A673 (cell line): ENCODE measurements at regions of chr2 and their contacts with region 1.

Region 1: DNA sequence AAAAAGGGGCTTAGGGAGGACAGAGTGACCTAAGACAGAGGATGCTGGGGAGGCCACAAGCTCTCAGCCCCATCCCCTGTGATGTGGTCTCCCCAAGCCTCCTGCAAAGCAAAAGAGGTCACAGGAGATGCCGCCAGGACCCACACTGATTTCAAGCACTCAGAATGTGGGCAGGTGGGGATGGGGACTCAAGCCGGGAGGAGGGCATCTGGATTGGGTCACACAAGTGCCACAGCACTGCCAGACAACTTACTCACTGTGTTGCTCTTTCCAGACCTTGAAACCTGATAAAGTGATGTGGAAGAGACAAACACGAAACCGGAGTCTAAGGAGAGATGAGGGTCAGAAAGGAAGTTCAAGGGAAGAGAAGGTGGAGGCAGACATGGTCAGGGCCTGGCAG is 95.7 kb downstream of the TTC32 start:
- DNase-seq: no peak
- H3K4me3 ChIP-seq: no peak overlapping the region
- H3K27ac ChIP-seq: no peak overlapping the region
- H3K4me1 ChIP-seq: no peaks in the 10 kb centered on the region
- H3K27me3 ChIP-seq: peaks cover 3% of the 10 kb centered on the region
- CTCF ChIP-seq: no peak

Region 2: DNA sequence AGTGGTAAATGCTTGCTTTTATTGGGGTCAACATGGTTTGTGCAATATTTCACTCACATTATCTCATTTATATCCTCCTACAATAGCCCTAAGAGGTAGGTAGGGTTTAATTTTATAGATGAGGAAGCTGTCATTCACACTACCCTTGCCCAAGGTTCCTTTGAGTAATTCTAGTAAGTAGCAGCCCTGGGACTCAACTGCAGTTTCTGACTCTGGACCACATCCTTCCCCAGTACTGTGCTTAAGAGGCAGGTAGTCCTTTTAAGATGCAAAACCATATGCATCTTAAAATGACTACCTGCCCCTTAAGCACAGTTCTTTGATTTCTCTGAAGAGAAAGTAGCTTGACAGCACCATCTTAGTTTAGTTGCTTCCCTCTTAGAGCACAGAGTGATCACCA is 1201.0 kb before region 1 on chr2:
- CTCF ChIA-PET with region 1: no interaction called
- POLR2A ChIA-PET with region 1: no interaction called
- intact Hi-C with region 1: no loop called
- DNase-seq: no peak
- H3K4me3 ChIP-seq: no peak overlapping the region
- H3K27ac ChIP-seq: no peak overlapping the region
- H3K4me1 ChIP-seq: peaks cover 4% of the 10 kb centered on the region
- H3K27me3 ChIP-seq: no peaks in the 10 kb centered on the region
- CTCF ChIP-seq: no peak

Region 3: GRCh38 chr2:19759880-19760279 is 46.3 kb before region 1 on chr2:
- CTCF ChIA-PET with region 1: interaction called, 10 read pairs
- POLR2A ChIA-PET with region 1: no interaction called
- intact Hi-C with region 1: no loop called
- DNase-seq: no peak
- H3K4me3 ChIP-seq: no peak overlapping the region
- H3K27ac ChIP-seq: no peak overlapping the region
- H3K4me1 ChIP-seq: no peaks in the 10 kb centered on the region
- H3K27me3 ChIP-seq: no peaks in the 10 kb centered on the region
- CTCF ChIP-seq: no peak

Region 4: DNA sequence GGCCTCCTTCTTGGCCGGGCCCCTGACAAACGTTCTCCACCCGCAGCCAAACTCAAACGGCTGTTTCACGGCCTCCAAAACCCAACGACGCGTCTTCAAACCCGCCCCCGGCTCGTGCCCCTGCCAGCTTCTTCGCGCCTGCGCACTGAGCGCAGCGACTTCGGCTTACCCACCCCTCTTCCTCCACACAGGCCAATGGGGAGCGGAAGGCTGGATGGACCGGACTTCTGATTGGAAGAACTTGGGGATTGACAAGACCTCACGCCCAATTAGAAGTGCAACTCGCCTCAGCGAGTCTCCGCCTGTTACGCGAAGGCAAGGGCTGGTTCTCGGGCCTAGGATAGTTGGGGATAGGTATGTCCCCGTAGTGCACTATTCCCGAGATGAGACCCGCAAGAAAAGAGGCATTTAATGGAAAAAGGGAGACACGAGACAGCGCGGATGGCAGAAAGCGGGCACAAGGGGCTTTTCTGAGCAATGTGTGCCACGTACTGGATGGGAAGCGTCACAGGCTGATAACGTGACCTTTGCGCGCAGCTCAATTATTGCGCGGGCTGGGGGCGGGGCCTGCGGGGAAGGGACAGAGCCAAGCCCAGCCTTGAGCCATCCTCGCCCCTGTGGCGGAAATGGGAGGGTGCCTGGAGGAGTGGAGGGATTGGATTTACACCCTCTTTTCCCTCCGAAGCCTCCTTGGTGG is 245.5 kb after region 1 on chr2 and contains the start of gene LAPTM4A:
- CTCF ChIA-PET with region 1: no interaction called
- POLR2A ChIA-PET with region 1: interaction called, 12 read pairs
- intact Hi-C with region 1: no loop called
- DNase-seq: peak; percentile 100
- H3K4me3 ChIP-seq: peak within 1 kb of the TSS; percentile 88
- H3K27ac ChIP-seq: peak within 1 kb of the TSS; percentile 99
- H3K4me1 ChIP-seq: peaks cover 24% of the 10 kb centered on the region
- H3K27me3 ChIP-seq: no peaks in the 10 kb centered on the region
- CTCF ChIP-seq: no peak
- total RNA-seq, gene LAPTM4A: 149 and 158 TPM in 2 replicates